CD4-positive, alpha-beta memory T cell (primary cell): ENCODE measurements at regions of chr10 and their contacts with region 1.

Region 1: DNA sequence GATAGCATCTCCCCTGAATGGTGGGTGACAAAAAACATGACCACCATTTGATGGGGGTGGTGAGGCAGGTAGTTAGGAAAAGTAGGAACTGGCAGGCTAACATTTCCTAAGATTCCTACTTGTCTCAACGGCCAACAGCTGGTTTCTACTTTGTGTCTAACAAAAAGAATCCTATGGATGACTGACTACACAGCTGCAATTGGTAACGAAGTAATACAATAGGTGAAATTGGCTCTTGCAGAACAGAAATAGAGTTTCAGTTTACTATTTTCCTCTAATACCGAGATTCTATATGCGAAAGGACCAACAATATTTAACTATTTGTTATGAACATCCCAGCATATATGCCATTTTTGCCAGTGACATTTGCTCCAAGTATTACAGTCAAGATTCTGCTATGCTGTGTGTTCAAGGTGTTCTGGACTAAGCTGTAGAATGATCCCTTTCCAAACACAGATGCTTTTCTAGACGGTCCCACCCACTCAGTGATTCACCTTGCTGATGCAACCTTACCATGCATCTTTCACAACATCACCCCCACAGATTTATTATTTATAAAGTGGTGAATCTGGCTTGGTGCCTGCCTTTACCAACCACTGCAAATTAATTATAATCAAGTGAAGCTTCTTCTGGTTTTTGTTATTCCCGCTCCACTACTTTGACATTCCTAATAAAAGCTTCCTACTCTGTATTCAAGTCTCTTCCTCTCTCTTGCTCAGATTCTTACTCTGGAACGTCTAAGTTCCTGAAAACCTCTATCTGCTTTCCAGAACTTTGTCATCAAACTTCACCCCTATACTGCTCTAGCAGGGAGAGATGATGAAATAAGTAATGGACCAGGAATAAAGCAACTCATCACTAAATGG is 16.8 kb downstream of the BBIP1 start:
- DNase-seq: no peak
- H3K4me3 ChIP-seq: no peak overlapping the region
- H3K4me3 Mint-ChIP-seq: no peak overlapping the region
- H3K27ac ChIP-seq: no peak overlapping the region
- H3K27ac Mint-ChIP-seq: peak overlapping the region in 6 of 7 donors; percentile 55 to 88 (median 68)
- H3K4me1 ChIP-seq: peaks cover under 1% of the 10 kb centered on the region
- H3K4me1 Mint-ChIP-seq: peaks cover 11 to 33% (median 24%) of the 10 kb centered on the region in 4 donors
- H3K27me3 ChIP-seq: no peaks in the 10 kb centered on the region
- H3K27me3 Mint-ChIP-seq: no peaks in the 10 kb centered on the region

Region 2: GRCh38 chr10:110883924-110884323 is 18.3 kb before region 1 on chr10:
- CTCF ChIA-PET with region 1: interaction called, 15 read pairs
- POLR2A ChIA-PET with region 1: interaction called, 14 read pairs
- intact Hi-C with region 1: no loop called
- DNase-seq: no peak
- H3K4me3 ChIP-seq: no peak overlapping the region
- H3K4me3 Mint-ChIP-seq: peak overlapping the region; percentile 54 to 83 (median 80)
- H3K27ac ChIP-seq: no peak overlapping the region
- H3K27ac Mint-ChIP-seq: peak overlapping the region; percentile 65 to 94 (median 80)
- H3K4me1 ChIP-seq: peaks cover 81% of the 10 kb centered on the region
- H3K4me1 Mint-ChIP-seq: peaks cover 52 to 83% (median 68%) of the 10 kb centered on the region in 4 donors
- H3K27me3 ChIP-seq: no peaks in the 10 kb centered on the region
- H3K27me3 Mint-ChIP-seq: no peaks in the 10 kb centered on the region

Region 3: DNA sequence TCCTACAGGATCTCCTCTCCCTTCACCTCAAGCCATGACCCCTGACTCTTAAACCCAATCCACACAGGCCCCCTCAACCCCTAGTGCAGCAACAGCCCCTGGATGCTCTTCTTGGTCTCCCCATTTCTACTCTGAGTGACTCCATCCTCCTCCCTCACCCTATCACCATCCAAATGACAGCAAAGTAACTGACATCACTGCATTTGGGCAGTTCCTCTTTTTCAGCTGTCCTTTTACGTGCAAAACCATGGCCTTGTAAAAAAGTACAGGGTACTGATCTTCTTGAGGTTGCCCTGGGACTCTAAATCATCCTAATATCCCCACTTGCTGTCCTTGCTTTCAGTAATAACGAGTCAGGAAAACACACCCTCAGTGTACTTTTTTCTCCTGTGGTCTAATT is 629.5 kb after region 1 on chr10:
- CTCF ChIA-PET with region 1: no interaction called
- POLR2A ChIA-PET with region 1: no interaction called
- intact Hi-C with region 1: no loop called
- DNase-seq: no peak
- H3K4me3 ChIP-seq: no peak overlapping the region
- H3K4me3 Mint-ChIP-seq: no peak overlapping the region
- H3K27ac ChIP-seq: no peak overlapping the region
- H3K27ac Mint-ChIP-seq: no peak overlapping the region
- H3K4me1 ChIP-seq: no peaks in the 10 kb centered on the region
- H3K4me1 Mint-ChIP-seq: no peaks in the 10 kb centered on the region
- H3K27me3 ChIP-seq: no peaks in the 10 kb centered on the region
- H3K27me3 Mint-ChIP-seq: peaks cover 5% of the 10 kb centered on the region in 2 donors